Transverse colon (tissue), 4 donors: ENCODE measurements at regions of chr9 and their contacts with region 1.

Region 1: GRCh38 chr9:74577956-74578355 is 80.8 kb downstream of the RORB start:
- DNase-seq: no peak
- H3K4me3 ChIP-seq: no peak overlapping the region
- H3K27ac ChIP-seq: no peak overlapping the region
- H3K4me1 ChIP-seq: no peaks in the 10 kb centered on the region
- H3K27me3 ChIP-seq: no peaks in the 10 kb centered on the region
- CTCF ChIP-seq: no peak
- EP300 ChIP-seq: no peak
- POLR2A ChIP-seq: no peak

Region 2: GRCh38 chr9:74496819-74497747 is 80.9 kb before region 1 on chr9 and contains the start of gene RORB:
- in situ Hi-C with region 1: loop called in 1 of 4 experiments (anchors 25 kb)
- intact Hi-C with region 1: no loop called
- DNase-seq: peak; percentile 35
- H3K4me3 ChIP-seq: peak within 1 kb of the TSS; percentile 24 to 67 (median 34)
- H3K27ac ChIP-seq: no peak within 1 kb of the TSS
- H3K4me1 ChIP-seq: peaks cover 0 to 39% (median 19%) of the 10 kb centered on the region in 4 donors
- H3K27me3 ChIP-seq: peaks cover 71% of the 10 kb centered on the region
- CTCF ChIP-seq: no peak
- EP300 ChIP-seq: no peak
- POLR2A ChIP-seq: no peak
- total RNA-seq, gene RORB: 0.20 to 1.1 (median 0.27) TPM in 3 of 4 donors, not detected in the other

Region 3: DNA sequence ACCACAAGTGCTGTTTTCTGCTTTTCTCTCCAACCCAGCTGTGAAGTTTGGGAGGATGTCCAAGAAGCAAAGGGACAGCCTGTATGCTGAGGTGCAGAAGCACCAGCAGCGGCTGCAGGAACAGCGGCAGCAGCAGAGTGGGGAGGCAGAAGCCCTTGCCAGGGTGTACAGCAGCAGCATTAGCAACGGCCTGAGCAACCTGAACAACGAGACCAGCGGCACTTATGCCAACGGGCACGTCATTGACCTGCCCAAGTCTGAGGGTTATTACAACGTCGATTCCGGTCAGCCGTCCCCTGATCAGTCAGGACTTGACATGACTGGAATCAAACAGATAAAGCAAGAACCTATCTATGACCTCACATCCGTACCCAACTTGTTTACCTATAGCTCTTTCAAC is 64.4 kb after region 1 on chr9:
- in situ Hi-C with region 1: no loop called
- intact Hi-C with region 1: no loop called
- DNase-seq: no peak
- H3K4me3 ChIP-seq: no peak overlapping the region
- H3K27ac ChIP-seq: no peak overlapping the region
- H3K4me1 ChIP-seq: no peaks in the 10 kb centered on the region
- H3K27me3 ChIP-seq: no peaks in the 10 kb centered on the region
- CTCF ChIP-seq: no peak
- EP300 ChIP-seq: no peak
- POLR2A ChIP-seq: no peak